GM10248 (cell line): ENCODE measurements at regions of chr2 and their contacts with region 1.

Region 1: DNA sequence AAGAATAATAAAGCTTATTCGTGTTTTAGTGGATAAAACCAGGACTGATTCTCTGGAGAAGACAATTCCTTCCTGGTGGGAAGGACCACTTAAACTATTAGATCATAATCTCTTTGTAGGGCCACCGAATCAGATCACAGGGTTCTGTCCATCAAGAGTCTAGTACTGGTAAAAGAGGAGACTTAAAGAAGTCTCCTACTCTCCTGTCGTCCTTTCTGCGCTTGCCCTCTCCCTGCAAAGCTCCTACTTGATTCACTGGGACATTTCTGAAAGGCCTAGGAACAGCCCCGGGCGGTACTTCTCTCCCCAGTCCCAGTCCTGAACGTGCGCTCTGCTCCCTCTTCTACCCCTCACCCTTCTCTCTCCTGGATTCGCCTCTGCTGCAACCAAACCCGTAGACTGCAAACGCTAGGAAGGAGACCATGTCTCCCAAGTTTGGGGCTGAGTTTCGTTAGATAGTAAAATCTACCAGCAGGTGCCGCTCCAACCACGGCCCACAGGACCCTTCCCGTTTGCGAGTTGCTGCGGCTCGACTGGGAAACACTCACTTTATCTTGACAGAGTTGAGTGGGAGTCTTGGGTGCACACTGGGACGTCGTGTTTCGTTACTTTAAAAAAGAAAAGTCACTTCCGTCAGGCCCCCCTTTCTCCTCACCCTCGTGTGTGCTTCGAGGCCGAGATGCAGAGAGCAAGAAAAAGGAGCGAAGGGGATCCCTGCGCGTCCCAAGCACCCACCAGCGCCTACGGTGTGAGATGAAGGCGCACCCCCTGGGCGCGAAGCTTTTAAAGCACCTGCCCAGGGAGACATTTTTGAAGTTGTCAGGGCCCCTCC is 923 bp downstream of the FIGLA start:
- DNase-seq: peak; percentile 69
- CTCF ChIP-seq: peak; percentile 78

Region 2: GRCh38 chr2:70686577-70687460 is 102.7 kb before region 1 on chr2:
- CTCF ChIA-PET with region 1: interaction called, 17 read pairs
- POLR2A ChIA-PET with region 1: no interaction called
- DNase-seq: peak; percentile 72
- CTCF ChIP-seq: peak; percentile 42

Region 3: DNA sequence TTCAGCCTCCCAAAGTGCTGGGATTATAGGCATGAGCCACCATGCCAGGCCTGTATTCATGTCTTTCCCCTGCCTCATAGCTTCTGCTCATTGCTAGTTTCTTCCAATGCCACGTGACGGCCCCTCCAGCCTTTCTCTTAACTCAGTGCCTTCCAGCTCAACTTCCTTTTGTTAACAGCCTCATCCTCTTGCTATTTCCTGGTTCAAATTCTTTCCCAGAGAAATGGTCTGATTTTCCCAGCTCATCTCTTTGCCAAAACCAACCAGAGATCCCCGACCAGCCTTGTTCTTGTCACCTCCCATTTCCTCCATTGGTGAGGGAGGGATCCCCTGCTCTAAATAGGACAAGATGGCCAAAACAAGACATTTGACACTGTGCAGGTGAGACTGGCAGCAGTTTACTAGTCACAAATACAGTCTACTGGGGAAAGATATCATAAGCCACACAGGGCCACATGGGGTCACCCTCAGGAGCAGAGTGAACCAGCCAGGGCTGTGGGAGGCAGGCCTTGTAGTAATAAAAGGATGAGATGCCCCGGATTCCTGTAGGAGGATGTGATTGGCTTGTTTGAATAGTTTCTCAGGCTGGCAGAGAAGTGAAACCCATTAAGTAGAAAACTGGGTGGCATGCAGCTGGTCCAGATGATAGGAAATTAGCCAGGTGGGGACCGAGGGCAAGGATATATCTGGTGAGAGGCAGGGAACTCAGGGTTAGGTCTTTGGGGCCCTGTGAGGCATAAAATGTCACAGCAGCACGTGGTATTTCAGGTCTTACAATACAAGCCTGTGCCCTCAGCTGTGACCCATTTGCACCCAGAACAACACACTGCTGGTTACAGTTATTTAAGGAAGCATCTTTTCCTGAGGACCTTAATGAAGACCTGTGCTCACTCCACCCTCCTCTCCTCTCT is 39.6 kb after region 1 on chr2:
- CTCF ChIA-PET with region 1: no interaction called
- POLR2A ChIA-PET with region 1: no interaction called
- DNase-seq: no peak
- CTCF ChIP-seq: no peak